ENCODE measurements at regions of chr9 and their contacts with region 1.

Region 1: DNA sequence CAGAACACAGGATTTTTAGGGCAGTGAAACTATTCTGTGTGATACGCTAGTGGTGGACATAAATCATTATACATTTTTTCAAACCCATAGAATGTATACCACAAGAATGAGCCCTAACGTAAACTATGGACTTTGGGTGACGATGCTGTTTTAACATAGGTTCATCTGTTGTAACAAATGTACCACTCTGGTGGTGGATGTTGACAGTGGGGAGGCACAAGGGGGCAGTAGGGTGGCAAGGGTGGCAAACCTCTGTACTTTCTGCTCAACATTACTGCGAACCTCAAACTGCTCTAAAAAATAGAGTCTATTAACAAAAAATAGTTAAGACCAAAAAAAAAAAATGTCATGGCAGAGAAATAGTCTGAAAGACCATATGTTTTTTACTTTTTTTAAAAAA is 9.1 kb upstream of the MVB12B start:
- DNase-seq: peak; percentile 47
- ATAC-seq: peak; percentile 56
- H3K4me3 ChIP-seq: no peak overlapping the region
- H3K27ac ChIP-seq: no peak overlapping the region
- H3K4me1 ChIP-seq: peaks cover 67% of the 10 kb centered on the region
- H3K27me3 ChIP-seq: peaks cover 0 to 3% of the 10 kb centered on the region in 2 experiments; a peak in 2 of 5 replicates
- CTCF ChIP-seq: peak; percentile 56
- EP300 ChIP-seq: no peak
- POLR2A ChIP-seq: no peak
- RAD21 ChIP-seq: peak; percentile 43; the same call in 1 of the 2 replicates

Region 2: GRCh38 chr9:126334721-126335621 is 17.5 kb after region 1 on chr9:
- CTCF ChIA-PET with region 1: interaction called, 3 read pairs
- POLR2A ChIA-PET with region 1: interaction called, 14 read pairs
- in situ Hi-C with region 1: no loop called
- intact Hi-C with region 1: loop called (anchors 1 kb)
- DNase-seq: peak; percentile 99
- ATAC-seq: peak; percentile 94
- H3K4me3 ChIP-seq: peak overlapping the region; percentile 64 to 82 (median 78); a peak in 5 of 6 replicates
- H3K27ac ChIP-seq: peak overlapping the region; percentile 85
- H3K4me1 ChIP-seq: peaks cover 95% of the 10 kb centered on the region
- H3K27me3 ChIP-seq: no peaks in the 10 kb centered on the region; a peak in 1 of 5 replicates
- CTCF ChIP-seq: peak; percentile 1; the same call in 1 of the 2 replicates
- EP300 ChIP-seq: peak; percentile 11 to 82; a peak in 3 of 4 replicates
- POLR2A ChIP-seq: peak; percentile 60 to 89
- RAD21 ChIP-seq: no peak

Region 3: DNA sequence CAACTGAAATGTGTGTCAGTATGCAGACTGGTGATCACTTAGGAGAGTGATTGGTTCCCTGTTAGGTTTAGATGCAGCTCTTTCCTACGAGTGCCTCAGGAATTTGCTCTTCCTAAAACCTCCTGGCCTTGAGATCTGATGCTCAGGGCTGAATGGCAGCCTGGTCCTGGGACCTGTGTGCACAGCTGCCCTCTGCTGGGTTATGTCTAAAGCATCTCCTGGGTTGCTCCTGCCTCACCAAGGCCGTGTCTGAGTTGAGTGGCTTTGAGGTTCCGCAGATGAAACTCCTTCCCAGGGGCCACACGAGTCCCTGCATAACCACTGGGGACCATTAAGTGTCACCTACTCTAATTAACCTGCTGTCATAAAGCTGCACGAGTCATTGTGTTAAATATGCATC is 68.6 kb after region 1 on chr9:
- CTCF ChIA-PET with region 1: interaction called, 13 read pairs
- POLR2A ChIA-PET with region 1: no interaction called
- in situ Hi-C with region 1: no loop called
- intact Hi-C with region 1: no loop called
- DNase-seq: peak; percentile 37
- ATAC-seq: peak; percentile 88
- H3K4me3 ChIP-seq: no peak overlapping the region
- H3K27ac ChIP-seq: no peak overlapping the region
- H3K4me1 ChIP-seq: no peaks in the 10 kb centered on the region
- H3K27me3 ChIP-seq: no peaks in the 10 kb centered on the region
- CTCF ChIP-seq: peak; percentile 70
- EP300 ChIP-seq: no peak
- POLR2A ChIP-seq: no peak
- RAD21 ChIP-seq: peak; percentile 75

Region 4: DNA sequence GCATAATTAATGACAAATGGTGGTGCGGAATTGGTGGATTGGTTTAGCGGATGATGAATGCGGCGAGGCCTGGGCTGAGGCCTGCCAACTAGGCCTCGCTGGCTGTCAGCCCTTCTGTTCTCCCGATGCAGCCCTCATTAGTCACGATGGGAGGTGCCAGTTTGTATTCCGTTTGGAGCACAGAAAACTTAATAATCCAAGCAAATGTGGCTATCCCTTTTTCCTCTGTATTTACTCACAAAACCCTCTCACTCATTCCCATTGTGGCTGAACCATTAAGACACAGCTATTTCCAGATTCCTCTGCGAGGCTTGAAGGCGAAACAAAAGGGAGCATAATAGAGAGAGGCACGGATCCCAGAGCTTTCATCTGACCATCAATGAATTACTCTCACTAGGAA is 123.4 kb after region 1 on chr9:
- CTCF ChIA-PET with region 1: no interaction called
- POLR2A ChIA-PET with region 1: no interaction called
- in situ Hi-C with region 1: no loop called
- intact Hi-C with region 1: no loop called
- DNase-seq: no peak
- ATAC-seq: no peak
- H3K4me3 ChIP-seq: no peak overlapping the region
- H3K27ac ChIP-seq: no peak overlapping the region
- H3K4me1 ChIP-seq: no peaks in the 10 kb centered on the region
- H3K27me3 ChIP-seq: no peaks in the 10 kb centered on the region
- CTCF ChIP-seq: no peak
- EP300 ChIP-seq: no peak
- POLR2A ChIP-seq: no peak
- RAD21 ChIP-seq: no peak